ENCODE measurements at regions of chr1 and their contacts with region 1.

Region 1: GRCh38 chr1:94854458-94855306 is 34.5 kb downstream of the SLC44A3 start:
- DNase-seq: peak; percentile 83
- ATAC-seq: peak; percentile 96 to 97
- H3K4me3 ChIP-seq: peak overlapping the region; percentile 50
- H3K27ac ChIP-seq: peak overlapping the region; percentile 80 to 89
- H3K4me1 ChIP-seq: peaks cover 17% of the 10 kb centered on the region
- CTCF ChIP-seq: peak; percentile 72
- EP300 ChIP-seq: no peak
- POLR2A ChIP-seq: no peak
- RAD21 ChIP-seq: peak; percentile 89 to 91

Region 2: DNA sequence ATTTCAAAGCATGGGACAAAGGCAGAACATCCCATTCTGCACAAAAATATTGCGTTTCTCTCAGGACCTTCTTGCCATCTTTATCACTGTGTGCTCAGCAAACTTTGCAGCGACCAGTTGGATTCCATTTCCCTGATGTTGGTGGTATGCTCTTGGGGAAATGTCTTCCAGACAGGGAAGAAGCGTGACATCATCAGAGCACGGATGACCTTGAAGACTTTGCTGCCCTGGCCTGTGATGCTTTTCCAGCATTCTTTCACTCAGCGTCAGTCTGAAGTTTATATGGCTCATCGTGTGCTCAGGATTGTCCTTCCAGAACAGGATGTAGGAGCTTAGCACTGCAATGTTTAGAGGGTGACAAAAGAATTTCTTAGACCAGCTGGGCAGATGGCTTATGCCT is 181.7 kb before region 1 on chr1:
- CTCF ChIA-PET with region 1: no interaction called
- POLR2A ChIA-PET with region 1: no interaction called
- DNase-seq: no peak
- ATAC-seq: no peak
- H3K4me3 ChIP-seq: no peak overlapping the region
- H3K27ac ChIP-seq: no peak overlapping the region
- H3K4me1 ChIP-seq: peaks cover 3% of the 10 kb centered on the region; the same call in 1 of the 3 replicates
- CTCF ChIP-seq: no peak
- EP300 ChIP-seq: no peak
- POLR2A ChIP-seq: no peak
- RAD21 ChIP-seq: no peak

Region 3: DNA sequence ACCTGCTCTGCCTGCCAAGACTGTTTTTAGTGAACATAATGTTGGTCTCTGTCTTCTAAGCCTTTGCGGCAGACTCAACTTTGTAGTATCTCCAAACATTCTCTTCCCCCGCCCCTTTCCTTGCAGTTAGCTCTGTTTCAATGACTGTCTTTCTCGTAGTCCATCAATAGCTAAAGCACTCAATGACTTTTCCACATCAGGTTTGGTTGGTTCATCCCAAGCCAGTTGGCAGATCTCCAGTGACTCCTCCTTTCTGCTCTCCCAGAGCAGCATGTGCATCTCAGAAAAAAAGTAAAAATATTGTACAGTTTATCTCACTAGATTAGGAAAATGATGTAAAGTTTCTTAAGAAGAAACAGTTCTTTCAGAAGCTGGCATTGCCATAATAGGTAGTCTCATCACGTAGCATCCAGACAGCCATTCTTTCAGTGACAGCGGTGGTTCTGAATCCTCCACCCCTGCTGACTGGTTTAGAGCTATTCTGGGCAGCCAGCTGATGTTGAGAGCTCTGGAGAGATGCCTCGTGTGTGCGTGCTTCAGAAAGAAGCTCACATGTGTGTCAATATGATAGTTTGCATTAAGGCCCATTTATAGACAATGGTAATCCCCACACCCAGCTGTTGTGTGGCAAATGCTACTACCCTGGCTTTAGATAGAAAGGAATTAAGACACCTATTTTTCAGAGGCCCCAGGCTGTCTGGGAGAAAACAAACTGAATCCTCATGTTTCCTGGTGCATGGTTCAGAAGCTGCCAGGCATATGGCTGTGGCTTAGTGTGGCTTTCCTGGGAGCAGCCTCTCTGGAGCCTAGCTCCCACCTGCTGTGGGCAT is 19.1 kb after region 1 on chr1:
- CTCF ChIA-PET with region 1: interaction called, 23 read pairs
- POLR2A ChIA-PET with region 1: no interaction called
- DNase-seq: no peak
- ATAC-seq: no peak
- H3K4me3 ChIP-seq: no peak overlapping the region
- H3K27ac ChIP-seq: no peak overlapping the region
- H3K4me1 ChIP-seq: no peaks in the 10 kb centered on the region
- CTCF ChIP-seq: no peak
- EP300 ChIP-seq: no peak
- POLR2A ChIP-seq: no peak
- RAD21 ChIP-seq: no peak

Region 4: GRCh38 chr1:94909486-94909885 is 54.8 kb after region 1 on chr1:
- CTCF ChIA-PET with region 1: interaction called, 23 read pairs
- POLR2A ChIA-PET with region 1: no interaction called
- DNase-seq: no peak
- ATAC-seq: no peak
- H3K4me3 ChIP-seq: no peak overlapping the region
- H3K27ac ChIP-seq: no peak overlapping the region
- H3K4me1 ChIP-seq: peaks cover 5% of the 10 kb centered on the region; the same call in 1 of the 3 replicates
- CTCF ChIP-seq: no peak
- EP300 ChIP-seq: no peak
- POLR2A ChIP-seq: no peak
- RAD21 ChIP-seq: no peak

Region 5: DNA sequence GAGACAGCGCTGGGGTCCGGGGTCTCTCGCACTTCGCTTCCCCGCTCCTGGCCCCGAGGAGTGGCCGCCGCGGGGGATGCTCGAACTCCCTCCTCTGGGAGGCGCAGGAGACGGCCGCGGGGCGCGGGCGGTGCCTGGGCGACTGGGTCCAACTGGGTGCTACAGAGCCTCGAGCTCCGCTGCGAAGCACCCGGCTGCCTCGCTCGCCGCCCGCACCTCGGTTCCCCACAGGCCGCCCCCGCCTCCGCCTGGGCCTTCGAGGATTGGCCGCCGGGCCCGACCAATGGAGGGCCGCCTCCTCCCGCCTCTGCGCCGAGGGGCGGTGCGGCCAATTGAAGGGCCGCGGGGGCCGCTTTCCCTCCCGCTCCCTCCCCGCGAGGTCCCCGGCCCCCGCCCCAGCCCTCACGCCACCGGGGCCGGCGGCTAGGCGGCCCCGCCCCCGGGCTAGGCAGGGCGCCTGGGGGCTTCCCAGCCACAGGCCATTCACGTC is 72.3 kb after region 1 on chr1 and contains the start of gene CNN3:
- CTCF ChIA-PET with region 1: interaction called, 32 read pairs
- POLR2A ChIA-PET with region 1: interaction called, 7 read pairs
- DNase-seq: peak; percentile 76 to 87
- ATAC-seq: peak; percentile 92 to 95
- H3K4me3 ChIP-seq: peak within 1 kb of the TSS; percentile 90
- H3K27ac ChIP-seq: peak within 1 kb of the TSS; percentile 88 to 98
- H3K4me1 ChIP-seq: peaks cover 45% of the 10 kb centered on the region
- CTCF ChIP-seq: no peak
- EP300 ChIP-seq: no peak
- POLR2A ChIP-seq: peak; percentile 76
- RAD21 ChIP-seq: no peak
- polyA plus RNA-seq, gene CNN3: 59.8 and 61.6 TPM in 2 replicates

Region 6: GRCh38 chr1:95023399-95024043 is 168.8 kb after region 1 on chr1:
- CTCF ChIA-PET with region 1: interaction called, 10 read pairs
- POLR2A ChIA-PET with region 1: no interaction called
- DNase-seq: no peak
- ATAC-seq: no peak
- H3K4me3 ChIP-seq: no peak overlapping the region
- H3K27ac ChIP-seq: no peak overlapping the region
- H3K4me1 ChIP-seq: peaks cover 33% of the 10 kb centered on the region
- CTCF ChIP-seq: no peak
- EP300 ChIP-seq: no peak
- POLR2A ChIP-seq: no peak
- RAD21 ChIP-seq: no peak

Region 7: GRCh38 chr1:95043141-95043980 is 188.7 kb after region 1 on chr1:
- CTCF ChIA-PET with region 1: interaction called, 149 read pairs
- POLR2A ChIA-PET with region 1: interaction called, 18 read pairs
- DNase-seq: peak; percentile 66 to 78
- ATAC-seq: peak; percentile 93 to 95
- H3K4me3 ChIP-seq: no peak overlapping the region
- H3K27ac ChIP-seq: peak overlapping the region in 1 of 2 experiments; percentile 35; a peak in 2 of 6 replicates
- H3K4me1 ChIP-seq: 0 out of 3 replicates have a peak, but pooled peaks cover 3% of the 10 kb centered on the region
- CTCF ChIP-seq: peak; percentile 95
- EP300 ChIP-seq: no peak
- POLR2A ChIP-seq: no peak
- RAD21 ChIP-seq: peak; percentile 90 to 92